ENCODE measurements at regions of chr4 and their contacts with region 1.

Region 1: DNA sequence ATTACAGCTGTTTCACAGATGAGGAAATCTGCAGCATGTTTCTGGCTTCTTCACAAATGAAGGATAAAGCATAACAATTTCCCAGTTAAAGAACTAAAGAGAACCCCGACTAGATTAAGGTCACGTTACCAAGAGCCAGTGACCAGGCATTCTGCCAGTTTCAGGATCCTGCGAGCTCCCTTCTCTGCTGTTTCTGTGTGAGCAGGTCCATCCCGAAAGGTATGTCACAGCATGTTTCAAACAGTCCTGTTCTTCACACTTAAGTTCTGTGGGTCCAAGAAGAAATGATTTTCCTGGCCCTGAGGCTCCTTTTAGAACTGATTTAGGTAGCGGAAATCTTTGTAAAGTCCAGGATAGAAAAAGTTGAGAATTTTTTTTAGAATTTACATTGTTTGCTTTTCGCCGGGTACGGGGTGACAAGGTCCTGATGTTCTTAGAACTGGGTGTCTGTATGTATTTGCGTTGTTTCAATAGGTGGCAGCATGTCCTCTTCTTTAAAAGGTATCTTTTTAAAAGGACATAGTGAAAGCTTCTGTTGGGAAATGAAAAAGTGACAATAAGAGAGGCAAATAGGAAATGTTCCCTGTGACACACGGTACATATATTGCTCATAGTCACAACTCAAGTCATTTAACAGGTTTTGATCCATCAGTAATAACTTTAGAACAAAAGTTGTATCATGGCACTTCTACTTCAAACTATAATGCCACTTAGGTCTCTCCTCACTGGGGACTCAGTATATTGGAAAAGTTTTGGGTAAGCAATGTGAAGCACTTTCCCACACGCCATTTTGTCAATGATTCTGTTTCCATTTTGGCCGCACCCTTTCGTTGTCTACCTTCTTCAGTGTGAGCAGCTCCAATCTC is 18.4 kb downstream of the IL21 start:
- DNase-seq: peak; percentile 49
- ATAC-seq: peak; percentile 94
- H3K4me3 ChIP-seq: peak overlapping the region; percentile 21 to 31
- H3K27ac ChIP-seq: no peak overlapping the region
- H3K4me1 ChIP-seq: peaks cover 0 to 8% of the 10 kb centered on the region in 2 experiments; a peak in 1 of 4 replicates
- H3K27me3 ChIP-seq: no peaks in the 10 kb centered on the region
- CTCF ChIP-seq: peak; percentile 40 to 68 (median 53)
- POLR2A ChIP-seq: no peak
- RAD21 ChIP-seq: peak; percentile 82

Region 2: DNA sequence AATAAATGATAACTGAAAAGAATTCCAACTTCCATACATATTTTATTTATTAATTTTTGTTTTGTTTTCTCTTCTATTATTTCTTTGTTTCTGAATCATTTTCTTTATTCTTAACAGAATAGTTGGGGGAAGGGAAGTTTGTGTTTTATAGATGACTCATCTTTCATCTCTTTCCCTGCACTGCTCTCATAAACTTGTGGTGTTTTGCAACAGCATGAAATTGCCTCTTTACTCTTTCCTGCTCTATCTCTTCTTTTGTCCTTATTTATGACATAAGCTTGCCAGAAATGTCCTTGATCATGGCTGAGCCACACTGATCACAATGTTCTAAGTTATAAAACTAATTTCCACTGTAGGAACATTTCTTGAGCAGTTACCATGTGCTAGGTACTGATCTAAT is 1244.0 kb before region 1 on chr4:
- CTCF ChIA-PET with region 1: no interaction called
- POLR2A ChIA-PET with region 1: no interaction called
- RAD21 ChIA-PET with region 1: no interaction called
- intact Hi-C with region 1: no loop called
- DNase-seq: peak; percentile 7
- ATAC-seq: no peak; the same call in 1 of the 2 replicates
- H3K4me3 ChIP-seq: no peak overlapping the region
- H3K27ac ChIP-seq: no peak overlapping the region
- H3K4me1 ChIP-seq: peaks cover 2 to 6% of the 10 kb centered on the region in 2 experiments; a peak in 3 of 4 replicates
- H3K27me3 ChIP-seq: no peaks in the 10 kb centered on the region
- CTCF ChIP-seq: no peak
- POLR2A ChIP-seq: no peak
- RAD21 ChIP-seq: no peak

Region 3: DNA sequence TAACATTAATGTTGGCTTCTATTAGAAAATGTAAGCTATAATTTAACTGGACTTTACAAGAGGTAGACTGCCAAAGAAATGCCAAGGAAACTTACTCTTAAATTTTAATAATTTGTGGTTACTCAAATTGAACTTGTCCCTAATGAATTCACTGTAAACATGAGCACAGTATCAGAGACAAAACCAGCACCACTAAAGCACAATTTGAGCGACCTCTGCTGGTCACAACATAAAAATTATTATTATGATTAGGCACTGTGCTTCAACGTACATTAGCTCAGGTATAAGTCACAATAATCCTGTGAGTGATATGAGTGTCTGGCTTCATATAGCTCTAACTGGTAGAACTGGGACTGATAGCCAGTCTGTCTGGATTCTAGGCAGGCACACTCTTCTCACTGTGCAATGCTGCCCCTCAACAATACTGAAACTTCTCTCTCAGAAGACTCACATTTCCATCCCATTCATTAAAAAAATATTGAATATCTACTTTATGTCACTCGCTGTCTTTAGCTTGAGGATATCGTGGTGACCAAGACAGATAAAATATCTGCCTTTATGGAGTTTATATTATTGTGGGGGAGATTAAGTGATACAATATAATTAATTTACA is 311.9 kb after region 1 on chr4:
- CTCF ChIA-PET with region 1: interaction called, 11 read pairs
- POLR2A ChIA-PET with region 1: no interaction called
- RAD21 ChIA-PET with region 1: interaction called in 1 of 2 experiments, 3 read pairs
- intact Hi-C with region 1: no loop called
- DNase-seq: no peak
- ATAC-seq: peak; percentile 82
- H3K4me3 ChIP-seq: no peak overlapping the region
- H3K27ac ChIP-seq: no peak overlapping the region
- H3K4me1 ChIP-seq: peaks cover 4 to 6% of the 10 kb centered on the region in 2 experiments; a peak in 3 of 4 replicates
- H3K27me3 ChIP-seq: no peaks in the 10 kb centered on the region
- CTCF ChIP-seq: peak in 2 of 3 experiments; percentile 46 to 64; a peak in 4 of 6 replicates
- POLR2A ChIP-seq: no peak
- RAD21 ChIP-seq: peak; percentile 77

Region 4: DNA sequence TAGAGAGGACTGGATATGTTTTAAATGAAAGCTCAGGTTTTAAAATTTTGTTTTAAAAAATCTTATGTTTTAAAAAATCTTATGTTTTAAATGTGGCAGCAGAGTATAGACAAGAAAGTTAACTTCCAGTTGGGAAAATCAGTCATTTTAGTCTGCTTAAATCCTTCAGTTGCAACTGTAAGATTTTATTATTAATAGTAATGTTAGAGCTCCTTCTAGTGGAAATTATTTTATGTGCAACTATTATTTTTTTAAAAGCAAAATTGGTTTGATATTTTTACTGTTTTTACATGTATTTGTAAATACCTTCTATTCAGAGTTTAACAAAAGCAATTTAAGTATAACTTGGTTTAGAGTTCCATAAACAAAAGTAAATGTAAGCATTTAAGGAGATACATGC is 328.4 kb after region 1 on chr4:
- CTCF ChIA-PET with region 1: interaction called, 13 read pairs
- POLR2A ChIA-PET with region 1: no interaction called
- RAD21 ChIA-PET with region 1: interaction called in 1 of 2 experiments, 3 read pairs
- intact Hi-C with region 1: loop called (anchors 2 kb)
- DNase-seq: no peak
- ATAC-seq: no peak
- H3K4me3 ChIP-seq: no peak overlapping the region
- H3K27ac ChIP-seq: no peak overlapping the region
- H3K4me1 ChIP-seq: no peaks in the 10 kb centered on the region
- H3K27me3 ChIP-seq: no peaks in the 10 kb centered on the region
- CTCF ChIP-seq: peak in 2 of 3 experiments; percentile 55 to 64; a peak in 3 of 6 replicates
- POLR2A ChIP-seq: no peak
- RAD21 ChIP-seq: peak; percentile 60

Region 5: GRCh38 chr4:123096038-123096437 is 493.5 kb after region 1 on chr4:
- CTCF ChIA-PET with region 1: interaction called, 3 read pairs
- POLR2A ChIA-PET with region 1: no interaction called
- RAD21 ChIA-PET with region 1: no interaction called
- intact Hi-C with region 1: loop called (anchors 10 kb)
- DNase-seq: peak; percentile 18
- ATAC-seq: peak; percentile 80
- H3K4me3 ChIP-seq: no peak overlapping the region
- H3K27ac ChIP-seq: no peak overlapping the region
- H3K4me1 ChIP-seq: peaks cover 0 to 10% of the 10 kb centered on the region in 2 experiments; a peak in 1 of 4 replicates
- H3K27me3 ChIP-seq: no peaks in the 10 kb centered on the region
- CTCF ChIP-seq: peak; percentile 20 to 59 (median 54); a peak in 5 of 6 replicates
- POLR2A ChIP-seq: no peak
- RAD21 ChIP-seq: peak; percentile 41; the same call in 1 of the 2 replicates

Measured in HCT116 (cell line).